Posterior cingulate gyrus (tissue), 11 donors: ENCODE measurements at regions of chr1 and their contacts with region 1.

Region 1: DNA sequence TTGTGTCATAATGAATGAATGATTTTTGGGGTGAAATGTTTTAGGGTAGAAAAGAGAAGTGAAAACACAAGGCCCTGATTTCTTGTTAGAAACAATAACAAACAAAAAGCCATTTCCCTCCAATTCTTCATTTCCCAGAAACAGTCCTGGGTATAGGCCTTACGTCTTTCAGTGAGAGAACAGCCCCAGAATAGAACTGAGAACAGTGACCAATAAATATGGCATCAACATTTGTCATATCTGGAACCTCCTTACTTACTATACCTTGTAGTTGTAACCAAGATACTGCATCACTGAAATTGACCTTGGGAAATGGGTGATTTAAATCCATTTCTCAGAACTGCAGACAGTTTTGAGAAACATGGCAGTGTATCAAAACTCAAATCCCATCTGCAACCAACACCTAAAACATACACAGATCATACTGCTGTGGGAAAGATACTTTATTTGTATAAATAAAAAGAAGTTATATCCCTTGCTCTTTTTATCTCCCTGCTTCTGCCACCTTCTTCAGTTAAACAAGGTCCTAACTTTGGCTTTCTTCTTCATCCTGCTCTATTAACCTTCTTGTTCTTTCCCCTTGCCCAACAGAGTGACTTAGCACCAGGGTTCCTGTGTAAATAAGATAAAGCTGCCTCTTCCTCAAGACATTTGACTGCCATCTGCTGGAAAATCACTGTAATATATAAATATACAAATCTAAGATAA is 19.5 kb downstream of the XKR8 start:
- DNase-seq: no peak

Region 2: DNA sequence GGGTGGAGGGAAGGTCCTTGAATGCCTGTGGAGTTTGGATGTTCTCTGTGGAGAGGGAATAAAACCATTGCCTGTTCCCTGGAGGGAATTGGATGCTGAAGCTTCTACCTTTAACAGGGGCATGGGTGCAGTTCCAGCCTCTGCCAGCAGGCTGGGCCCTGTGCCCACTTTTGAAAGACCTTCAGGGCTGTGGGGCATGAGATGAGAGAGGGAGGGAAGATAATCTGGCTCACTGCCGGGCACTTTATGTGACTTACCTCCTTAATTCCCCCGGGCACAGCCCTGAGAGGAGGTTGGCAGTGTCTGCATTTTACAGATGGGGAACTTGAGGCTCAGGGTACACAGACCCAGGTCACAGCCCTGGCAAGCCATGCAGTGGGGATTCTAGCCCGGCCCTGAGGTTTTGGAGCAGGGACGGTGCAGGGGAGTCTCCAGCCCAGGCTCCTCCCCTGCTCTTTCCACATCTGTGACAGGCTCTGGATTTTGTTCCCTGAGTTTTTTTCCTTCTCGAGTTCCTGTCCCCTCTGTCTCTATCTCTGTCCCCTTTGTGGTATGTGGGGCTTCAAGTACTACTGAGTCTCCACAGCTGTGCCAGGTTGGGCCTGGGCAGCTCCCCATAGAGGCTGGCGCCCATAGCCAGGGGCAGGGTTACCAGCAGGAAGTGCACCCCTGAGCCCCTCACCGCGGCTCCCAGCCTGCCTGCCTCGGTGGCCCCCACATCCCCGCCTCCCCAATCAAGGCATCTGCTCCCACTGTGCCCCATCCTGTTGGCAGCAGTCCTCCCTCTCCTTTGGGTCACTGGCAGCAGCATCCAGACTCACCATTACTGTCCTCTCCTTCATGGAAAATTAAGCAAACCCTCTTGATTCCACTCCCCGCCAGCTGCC is 121.0 kb before region 1 on chr1:
- intact Hi-C with region 1: loop called (anchors 1 kb)
- DNase-seq: peak; percentile 72 to 98 (median 90)